ENCODE measurements at regions of chr7 and their contacts with region 1.

Region 1: DNA sequence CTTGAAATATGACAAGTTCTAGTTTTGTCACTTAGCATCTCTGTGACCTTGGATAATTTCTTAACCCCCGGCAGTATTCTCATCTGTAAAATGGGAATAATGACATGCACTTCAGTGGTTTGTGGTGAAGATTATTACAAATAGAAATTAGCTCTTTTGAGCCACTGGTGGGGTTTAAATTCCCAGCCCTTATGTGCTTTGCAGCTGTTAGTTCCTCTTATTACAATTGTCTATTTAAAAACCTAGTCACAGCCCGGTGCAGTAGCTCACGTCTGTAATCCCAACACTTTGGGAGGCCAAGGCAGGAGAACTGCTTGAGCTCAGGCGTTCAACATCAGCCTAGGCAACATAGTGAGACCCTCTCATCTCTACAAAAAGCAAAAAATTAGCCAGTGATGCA is 30.1 kb downstream of the CAV1 start:
- DNase-seq: no peak
- ATAC-seq: peak in 1 of 8 donors; percentile 16
- H3K4me3 ChIP-seq: no peak overlapping the region
- H3K27ac ChIP-seq: peak overlapping the region in 8 of 10 donors; percentile 1 to 70 (median 26)
- H3K4me1 ChIP-seq: peaks cover 8 to 98% (median 72%) of the 10 kb centered on the region in 9 donors
- H3K27me3 ChIP-seq: no peaks in the 10 kb centered on the region
- CTCF ChIP-seq: no peak

Region 2: DNA sequence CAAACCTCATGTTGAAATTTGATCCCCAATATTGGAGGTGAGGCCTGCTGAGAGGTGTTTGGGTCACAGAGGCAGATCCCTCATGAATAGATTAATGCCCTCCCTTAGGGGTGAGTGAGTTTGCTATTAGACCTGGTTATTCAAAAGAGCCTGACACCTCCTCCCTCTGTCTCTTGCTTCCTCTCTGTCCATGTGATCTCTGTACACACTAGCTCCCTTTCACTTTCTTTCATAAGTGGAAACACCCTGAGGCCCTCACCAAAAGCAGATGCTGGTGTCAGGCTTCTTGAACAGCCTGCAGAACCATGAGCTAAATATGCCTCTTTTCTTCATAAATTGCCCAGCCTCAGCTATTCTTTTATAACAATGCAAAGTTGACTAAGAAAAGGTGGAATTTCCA is 1185.9 kb before region 1 on chr7:
- intact Hi-C with region 1: loop called in 1 of 10 experiments (anchors 5 kb)
- DNase-seq: no peak
- ATAC-seq: no peak
- H3K4me3 ChIP-seq: no peak overlapping the region
- H3K27ac ChIP-seq: no peak overlapping the region
- H3K4me1 ChIP-seq: no peaks in the 10 kb centered on the region
- H3K27me3 ChIP-seq: no peaks in the 10 kb centered on the region
- CTCF ChIP-seq: no peak

Region 3: GRCh38 chr7:116630932-116631745 is 76.2 kb after region 1 on chr7:
- intact Hi-C with region 1: no loop called
- DNase-seq: peak; percentile 29 to 32
- ATAC-seq: peak; percentile 54 to 95 (median 72)
- H3K4me3 ChIP-seq: no peak overlapping the region
- H3K27ac ChIP-seq: peak overlapping the region in 2 of 10 donors; percentile 33 to 52
- H3K4me1 ChIP-seq: peaks cover 0 to 24% (median 7%) of the 10 kb centered on the region in 9 donors
- H3K27me3 ChIP-seq: no peaks in the 10 kb centered on the region
- CTCF ChIP-seq: no peak

Region 4: DNA sequence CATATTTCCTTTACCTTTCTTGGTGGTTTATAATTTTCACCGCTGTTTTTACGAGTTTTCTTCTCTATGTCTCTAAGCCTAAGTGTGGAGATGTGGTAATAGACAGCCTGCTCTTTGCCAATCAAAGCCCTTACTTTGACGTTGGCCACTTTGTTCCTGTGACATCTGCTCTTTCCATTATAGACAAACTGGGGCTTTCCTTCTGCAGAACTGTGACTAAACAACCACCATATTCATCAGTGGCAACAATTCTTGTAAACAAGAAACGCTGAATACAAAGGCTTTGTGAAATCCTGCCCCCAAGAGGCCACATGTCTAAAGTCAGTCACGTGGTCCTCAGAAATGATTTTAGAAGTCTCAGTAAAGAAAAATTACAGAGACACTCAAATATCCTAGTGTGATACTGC is 247.8 kb after region 1 on chr7:
- intact Hi-C with region 1: no loop called
- DNase-seq: peak in 1 of 2 donors; percentile 26
- ATAC-seq: peak in 3 of 8 donors; percentile 8 to 39 (median 39)
- H3K4me3 ChIP-seq: no peak overlapping the region
- H3K27ac ChIP-seq: no peak overlapping the region
- H3K4me1 ChIP-seq: peaks cover 0 to 27% (median 7%) of the 10 kb centered on the region in 9 donors
- H3K27me3 ChIP-seq: no peaks in the 10 kb centered on the region
- CTCF ChIP-seq: peak; percentile 11 to 65 (median 43)